ENCODE measurements at regions of chr15 and their contacts with region 1.

Region 1: DNA sequence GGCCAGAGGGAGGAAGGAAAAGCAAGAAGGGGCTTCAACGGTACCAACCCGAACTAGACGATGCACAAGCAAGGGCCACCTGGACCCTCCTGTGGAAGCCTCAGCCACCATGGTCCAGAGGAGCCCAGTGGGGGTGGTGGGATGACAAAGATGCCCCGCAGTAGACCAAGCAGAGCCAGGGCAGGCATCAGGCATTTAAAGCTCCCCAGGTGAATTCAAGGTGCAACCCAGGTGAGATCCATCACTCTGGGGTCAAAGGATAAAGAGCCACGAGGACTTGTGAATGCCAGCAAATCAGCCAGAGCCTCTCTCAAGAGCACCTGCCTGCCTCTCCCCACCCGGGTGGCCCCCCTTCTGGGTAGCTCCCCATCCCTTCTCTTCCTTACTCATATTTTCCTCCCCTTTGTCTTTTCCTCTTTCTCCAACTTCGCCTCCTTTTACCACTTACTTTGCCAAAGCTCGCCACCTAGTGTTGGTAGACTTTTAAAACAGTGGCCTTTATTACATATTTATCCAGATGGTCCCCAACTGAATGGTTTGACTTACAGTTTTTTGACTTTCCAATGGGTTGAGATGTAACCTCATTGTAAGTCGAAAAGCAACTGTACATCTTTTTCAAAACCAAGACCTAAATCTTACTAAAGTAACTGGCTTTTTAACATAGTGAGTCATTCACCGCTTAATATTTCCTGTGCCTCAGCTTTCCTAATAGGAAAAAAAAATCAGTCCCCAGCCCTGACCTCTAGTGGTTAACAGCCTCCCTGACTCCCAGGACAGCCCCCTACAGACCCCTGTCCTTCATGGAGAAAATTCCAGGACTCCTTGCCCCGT is 18.8 kb downstream of the PLA2G4F start:
- DNase-seq: no peak
- ATAC-seq: peak in 1 of 4 donors; percentile 45
- H3K4me3 ChIP-seq: no peak overlapping the region
- H3K27ac ChIP-seq: no peak overlapping the region
- H3K4me1 ChIP-seq: no peaks in the 10 kb centered on the region
- H3K27me3 ChIP-seq: no peaks in the 10 kb centered on the region
- CTCF ChIP-seq: peak; percentile 13 to 66 (median 51)
- POLR2A ChIP-seq: no peak

Region 2: DNA sequence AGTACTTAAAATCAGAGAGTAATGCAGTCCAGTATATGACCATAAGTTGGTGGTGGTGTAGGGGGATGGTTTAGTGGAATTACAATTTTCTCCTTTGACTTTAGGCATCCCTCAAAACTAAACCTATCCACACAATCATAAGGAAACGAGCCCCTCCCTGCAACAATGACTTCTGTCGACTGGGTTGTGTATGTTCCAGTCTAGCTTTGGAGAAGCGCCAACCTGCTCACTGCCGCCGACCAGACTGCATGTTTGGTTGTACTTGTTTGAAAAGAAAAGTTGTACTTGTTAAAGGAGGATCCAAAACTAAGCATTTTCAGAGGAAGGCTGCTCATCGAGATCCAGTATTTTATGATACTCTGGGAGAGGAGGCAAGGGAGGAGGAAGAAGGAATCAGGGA is 424.6 kb before region 1 on chr15:
- intact Hi-C with region 1: no loop called
- DNase-seq: peak in 4 of 5 donors; percentile 31 to 45 (median 39)
- ATAC-seq: peak; percentile 44 to 66 (median 65)
- H3K4me3 ChIP-seq: no peak overlapping the region
- H3K27ac ChIP-seq: peak overlapping the region in 1 of 12 donors; percentile 16
- H3K4me1 ChIP-seq: peaks cover 0 to 18% (median 0%) of the 10 kb centered on the region in 12 donors
- H3K27me3 ChIP-seq: no peaks in the 10 kb centered on the region
- CTCF ChIP-seq: no peak
- POLR2A ChIP-seq: no peak

Region 3: GRCh38 chr15:41980654-41981323 is 156.9 kb before region 1 on chr15:
- intact Hi-C with region 1: loop called in 5 of 10 experiments (anchors 5 to 10 kb)
- DNase-seq: peak in 2 of 5 donors; percentile 36 to 38
- ATAC-seq: peak; percentile 17 to 70 (median 46)
- H3K4me3 ChIP-seq: no peak overlapping the region
- H3K27ac ChIP-seq: peak overlapping the region in 2 of 12 donors; percentile 35 to 57
- H3K4me1 ChIP-seq: peaks cover 0 to 30% (median 9%) of the 10 kb centered on the region in 12 donors
- H3K27me3 ChIP-seq: no peaks in the 10 kb centered on the region
- CTCF ChIP-seq: no peak
- POLR2A ChIP-seq: no peak

Region 4: DNA sequence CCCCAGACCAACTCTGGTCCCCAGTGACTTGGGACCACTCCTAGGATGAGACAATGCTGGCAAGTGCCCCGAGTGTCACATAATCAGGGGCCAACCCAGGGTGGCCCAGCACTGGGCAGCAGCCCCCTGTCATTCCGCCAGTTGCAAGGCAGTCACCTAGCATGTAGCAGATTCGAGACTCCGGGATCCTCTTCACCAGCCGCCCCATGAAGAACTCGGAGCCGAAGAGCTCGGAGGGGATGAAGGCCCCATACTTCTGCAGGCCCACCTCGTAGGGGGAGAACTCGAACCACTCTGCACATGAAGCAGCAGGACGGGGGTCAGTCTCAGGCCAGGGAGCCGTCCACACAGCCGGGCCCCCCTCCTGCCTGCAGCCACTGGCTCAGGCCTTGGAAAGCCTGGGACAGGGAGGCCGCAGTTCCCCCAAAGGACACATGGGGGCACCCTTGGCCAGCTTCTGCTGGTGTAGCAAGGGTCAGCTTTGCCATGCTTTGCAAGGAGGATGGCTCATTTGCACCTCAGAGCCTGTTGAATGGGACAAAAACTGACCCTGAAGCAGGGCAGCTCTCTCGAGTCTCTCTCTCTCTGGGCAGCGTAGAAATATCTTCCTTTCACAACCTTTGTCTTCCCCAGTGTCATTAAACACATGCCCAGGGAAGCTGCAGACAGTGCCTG is 148.2 kb before region 1 on chr15:
- intact Hi-C with region 1: loop called in 8 of 10 experiments (anchors 2 to 10 kb)
- DNase-seq: peak; percentile 77 to 91 (median 83)
- ATAC-seq: peak; percentile 65 to 91 (median 89)
- H3K4me3 ChIP-seq: no peak overlapping the region
- H3K27ac ChIP-seq: no peak overlapping the region
- H3K4me1 ChIP-seq: peaks cover 0 to 10% (median 0%) of the 10 kb centered on the region in 12 donors
- H3K27me3 ChIP-seq: no peaks in the 10 kb centered on the region
- CTCF ChIP-seq: peak; percentile 96 to 100 (median 98)
- POLR2A ChIP-seq: no peak

Region 5: GRCh38 chr15:42065033-42065432 is 72.6 kb before region 1 on chr15:
- intact Hi-C with region 1: loop called (anchors 1 to 5 kb)
- DNase-seq: peak in 1 of 5 donors; percentile 66
- ATAC-seq: peak in 3 of 4 donors; percentile 13 to 60 (median 21)
- H3K4me3 ChIP-seq: no peak overlapping the region
- H3K27ac ChIP-seq: no peak overlapping the region
- H3K4me1 ChIP-seq: peaks cover 0 to 4% (median 0%) of the 10 kb centered on the region in 12 donors
- H3K27me3 ChIP-seq: no peaks in the 10 kb centered on the region
- CTCF ChIP-seq: no peak
- POLR2A ChIP-seq: no peak

Region 6: GRCh38 chr15:42084460-42085235 is 53.0 kb before region 1 on chr15:
- intact Hi-C with region 1: loop called in 3 of 10 experiments (anchors 5 kb)
- DNase-seq: peak in 4 of 5 donors; percentile 54 to 83 (median 62)
- ATAC-seq: peak in 3 of 4 donors; percentile 80 to 88 (median 85)
- H3K4me3 ChIP-seq: no peak overlapping the region
- H3K27ac ChIP-seq: no peak overlapping the region
- H3K4me1 ChIP-seq: peaks cover 0 to 21% (median 1%) of the 10 kb centered on the region in 12 donors
- H3K27me3 ChIP-seq: peaks cover 0 to 20% (median 0%) of the 10 kb centered on the region in 9 donors
- CTCF ChIP-seq: peak; percentile 87 to 98 (median 94)
- POLR2A ChIP-seq: no peak

Region 7: DNA sequence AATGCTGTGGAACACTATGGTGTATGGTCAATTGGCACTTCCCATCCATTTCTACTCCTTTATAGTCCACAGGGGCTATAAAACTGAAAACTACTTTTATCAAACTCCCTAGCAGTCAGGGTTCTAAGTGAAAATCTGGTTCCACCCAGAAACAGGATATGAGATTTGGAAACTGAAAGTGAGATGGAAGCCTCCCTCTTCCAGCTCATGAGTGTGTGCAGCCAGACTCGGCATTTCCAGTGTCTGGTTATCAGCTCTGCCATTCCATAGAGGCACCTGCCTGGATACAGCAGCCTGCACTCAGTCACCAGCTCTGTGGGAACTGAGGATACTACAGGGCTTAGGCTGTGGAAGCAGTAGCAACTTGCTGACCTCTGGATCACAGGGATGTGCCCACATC is 33.5 kb after region 1 on chr15:
- intact Hi-C with region 1: no loop called
- DNase-seq: no peak
- ATAC-seq: peak in 3 of 4 donors; percentile 14 to 72 (median 63)
- H3K4me3 ChIP-seq: no peak overlapping the region
- H3K27ac ChIP-seq: peak overlapping the region in 8 of 12 donors; percentile 19 to 75 (median 46)
- H3K4me1 ChIP-seq: peaks cover 0 to 32% (median 11%) of the 10 kb centered on the region in 12 donors
- H3K27me3 ChIP-seq: no peaks in the 10 kb centered on the region
- CTCF ChIP-seq: no peak
- POLR2A ChIP-seq: no peak